GM12878 (cell line): ENCODE measurements at regions of chr3 and their contacts with region 1.

Region 1: DNA sequence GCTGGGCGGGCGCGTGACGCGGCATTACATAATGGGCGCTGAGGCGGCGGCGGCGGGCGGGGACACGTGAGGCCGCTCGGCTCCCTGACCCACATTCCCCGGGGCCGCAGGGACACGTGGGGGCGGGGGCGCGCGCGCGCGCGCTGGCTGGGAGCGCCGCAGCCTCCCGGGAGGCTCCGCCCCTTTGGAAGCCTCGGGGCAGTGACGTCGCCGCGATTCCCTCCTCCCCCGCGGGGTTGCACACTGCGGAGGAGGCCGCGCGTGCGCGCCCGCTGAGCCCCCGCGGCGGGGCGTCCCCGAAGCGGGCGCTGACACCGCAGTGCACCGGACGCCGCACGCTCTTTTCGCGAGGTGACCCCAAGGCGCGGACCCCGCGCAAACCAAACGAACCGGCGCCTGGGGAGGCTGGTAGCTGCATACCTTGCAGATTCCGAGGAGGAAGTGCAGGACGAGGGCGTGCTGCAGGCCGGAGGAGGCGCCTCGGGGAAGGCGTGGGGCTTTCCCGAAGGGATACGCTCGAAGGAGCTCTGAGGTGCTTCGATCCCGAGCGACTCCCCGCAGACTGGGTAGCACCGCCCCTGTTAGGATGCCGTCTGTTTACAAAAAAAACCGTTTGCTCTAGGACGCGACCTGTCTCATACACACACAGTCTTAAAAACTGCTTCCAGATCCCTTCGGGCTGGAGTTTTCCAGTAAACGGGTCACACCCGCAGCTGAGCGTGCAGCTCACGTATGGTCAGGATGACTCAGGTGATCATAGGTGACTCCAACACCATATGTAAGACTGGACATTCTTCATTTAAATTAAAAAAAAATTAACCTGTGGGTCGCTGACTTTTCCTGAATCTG is 1.0 kb downstream of the NR1D2 start:
- DNase-seq: peak; percentile 66
- ATAC-seq: peak; percentile 81
- H3K4me3 ChIP-seq: peak overlapping the region; percentile 98
- H3K27ac ChIP-seq: peak overlapping the region; percentile 82
- H3K4me1 ChIP-seq: peaks cover 12% of the 10 kb centered on the region
- H3K27me3 ChIP-seq: peaks cover 0 to 3% of the 10 kb centered on the region in 2 experiments; a peak in 1 of 4 replicates
- CTCF ChIP-seq: no peak
- EP300 ChIP-seq: peak in 1 of 2 experiments; percentile 39; a peak in 1 of 4 replicates
- POLR2A ChIP-seq: peak; percentile 78
- RAD21 ChIP-seq: no peak

Region 2: GRCh38 chr3:23659274-23659673 is 286.9 kb before region 1 on chr3:
- CTCF ChIA-PET with region 1: no interaction called
- POLR2A ChIA-PET with region 1: no interaction called
- RAD21 ChIA-PET with region 1: no interaction called
- SMC1A ChIA-PET with region 1: interaction called, 3 read pairs
- in situ Hi-C with region 1: no loop called
- intact Hi-C with region 1: loop called (anchors 10 kb)
- DNase-seq: peak; percentile 60
- ATAC-seq: peak; percentile 88
- H3K4me3 ChIP-seq: no peak overlapping the region
- H3K27ac ChIP-seq: peak overlapping the region; percentile 81
- H3K4me1 ChIP-seq: peaks cover 36% of the 10 kb centered on the region
- H3K27me3 ChIP-seq: no peaks in the 10 kb centered on the region
- CTCF ChIP-seq: no peak
- EP300 ChIP-seq: peak; percentile 36 to 56; a peak in 1 of 4 replicates
- POLR2A ChIP-seq: no peak
- RAD21 ChIP-seq: no peak

Region 3: DNA sequence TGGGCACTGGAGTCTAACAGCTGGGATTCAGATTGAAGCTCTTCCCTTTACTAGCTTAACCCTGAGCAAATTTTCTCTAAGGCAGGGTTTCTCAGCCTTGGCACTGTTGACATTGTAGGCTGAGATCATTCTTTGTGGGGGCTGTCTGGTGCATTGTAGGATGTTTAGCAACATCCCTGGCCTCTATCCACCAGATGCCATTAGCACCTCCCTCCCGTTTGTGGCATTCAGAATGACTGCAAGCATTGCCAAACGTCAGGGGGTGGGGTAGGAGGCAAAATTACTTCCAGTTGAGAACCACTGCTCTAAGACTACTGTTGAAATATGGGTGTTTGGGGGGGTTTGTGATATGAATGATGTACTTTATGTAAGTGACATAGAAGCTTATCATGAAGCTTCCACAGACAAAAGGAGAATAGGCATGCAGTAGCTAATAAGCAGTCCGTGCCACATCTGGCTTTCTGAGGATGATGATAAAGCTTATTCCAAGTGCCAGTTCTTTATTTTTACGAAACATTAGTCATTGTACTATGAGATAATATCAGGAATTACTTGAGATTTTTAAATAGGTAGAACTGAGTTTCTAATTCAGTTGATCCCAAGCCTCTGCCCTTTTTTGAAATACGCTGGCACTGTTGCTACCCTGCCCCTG is 68.7 kb before region 1 on chr3:
- CTCF ChIA-PET with region 1: no interaction called
- POLR2A ChIA-PET with region 1: no interaction called
- RAD21 ChIA-PET with region 1: no interaction called
- SMC1A ChIA-PET with region 1: no interaction called
- in situ Hi-C with region 1: no loop called
- intact Hi-C with region 1: no loop called
- DNase-seq: no peak
- ATAC-seq: no peak
- H3K4me3 ChIP-seq: no peak overlapping the region
- H3K27ac ChIP-seq: no peak overlapping the region
- H3K4me1 ChIP-seq: no peaks in the 10 kb centered on the region
- H3K27me3 ChIP-seq: no peaks in the 10 kb centered on the region
- CTCF ChIP-seq: no peak
- EP300 ChIP-seq: no peak
- POLR2A ChIP-seq: no peak
- RAD21 ChIP-seq: no peak

Region 4: GRCh38 chr3:23916886-23917678 is 29.0 kb before region 1 on chr3 and contains the starts of genes NKIRAS1 and RPL15:
- CTCF ChIA-PET with region 1: interaction called, 6 read pairs
- POLR2A ChIA-PET with region 1: interaction called, 11 read pairs
- RAD21 ChIA-PET with region 1: interaction called, 18 read pairs
- SMC1A ChIA-PET with region 1: interaction called, 18 read pairs
- in situ Hi-C with region 1: no loop called
- intact Hi-C with region 1: loop called (anchors 1 kb)
- DNase-seq: peak; percentile 89
- ATAC-seq: peak; percentile 90
- H3K4me3 ChIP-seq: peak within 1 kb of the TSS; percentile 100
- H3K27ac ChIP-seq: peak within 1 kb of the TSS; percentile 95
- H3K4me1 ChIP-seq: peaks cover 3% of the 10 kb centered on the region
- H3K27me3 ChIP-seq: no peaks in the 10 kb centered on the region
- CTCF ChIP-seq: peak in 2 of 3 experiments; percentile 15 to 38; a peak in 2 of 6 replicates
- EP300 ChIP-seq: peak; percentile 42 to 71; a peak in 2 of 4 replicates
- POLR2A ChIP-seq: peak; percentile 100
- RAD21 ChIP-seq: no peak
- polyA plus RNA-seq, gene NKIRAS1: 8.9 to 10.2 TPM
- polyA plus RNA-seq, gene RPL15: 6,967 to 10,761 TPM

Region 5: GRCh38 chr3:23959135-23959900 is 13.2 kb after region 1 on chr3:
- CTCF ChIA-PET with region 1: interaction called, 4 read pairs
- POLR2A ChIA-PET with region 1: interaction called, 9 read pairs
- RAD21 ChIA-PET with region 1: interaction called, 3 read pairs
- SMC1A ChIA-PET with region 1: interaction called, 14 read pairs
- in situ Hi-C with region 1: no loop called
- intact Hi-C with region 1: no loop called
- DNase-seq: no peak
- ATAC-seq: peak; percentile 66
- H3K4me3 ChIP-seq: no peak overlapping the region
- H3K27ac ChIP-seq: no peak overlapping the region
- H3K4me1 ChIP-seq: no peaks in the 10 kb centered on the region
- H3K27me3 ChIP-seq: no peaks in the 10 kb centered on the region
- CTCF ChIP-seq: no peak
- EP300 ChIP-seq: no peak
- POLR2A ChIP-seq: no peak
- RAD21 ChIP-seq: no peak

Region 6: GRCh38 chr3:24351779-24352469 is 405.8 kb after region 1 on chr3:
- CTCF ChIA-PET with region 1: no interaction called
- POLR2A ChIA-PET with region 1: no interaction called
- RAD21 ChIA-PET with region 1: no interaction called
- SMC1A ChIA-PET with region 1: no interaction called
- in situ Hi-C with region 1: no loop called
- intact Hi-C with region 1: no loop called
- DNase-seq: no peak
- ATAC-seq: no peak
- H3K4me3 ChIP-seq: no peak overlapping the region
- H3K27ac ChIP-seq: no peak overlapping the region
- H3K4me1 ChIP-seq: no peaks in the 10 kb centered on the region
- H3K27me3 ChIP-seq: no peaks in the 10 kb centered on the region
- CTCF ChIP-seq: no peak
- EP300 ChIP-seq: no peak
- POLR2A ChIP-seq: no peak
- RAD21 ChIP-seq: no peak

Region 7: DNA sequence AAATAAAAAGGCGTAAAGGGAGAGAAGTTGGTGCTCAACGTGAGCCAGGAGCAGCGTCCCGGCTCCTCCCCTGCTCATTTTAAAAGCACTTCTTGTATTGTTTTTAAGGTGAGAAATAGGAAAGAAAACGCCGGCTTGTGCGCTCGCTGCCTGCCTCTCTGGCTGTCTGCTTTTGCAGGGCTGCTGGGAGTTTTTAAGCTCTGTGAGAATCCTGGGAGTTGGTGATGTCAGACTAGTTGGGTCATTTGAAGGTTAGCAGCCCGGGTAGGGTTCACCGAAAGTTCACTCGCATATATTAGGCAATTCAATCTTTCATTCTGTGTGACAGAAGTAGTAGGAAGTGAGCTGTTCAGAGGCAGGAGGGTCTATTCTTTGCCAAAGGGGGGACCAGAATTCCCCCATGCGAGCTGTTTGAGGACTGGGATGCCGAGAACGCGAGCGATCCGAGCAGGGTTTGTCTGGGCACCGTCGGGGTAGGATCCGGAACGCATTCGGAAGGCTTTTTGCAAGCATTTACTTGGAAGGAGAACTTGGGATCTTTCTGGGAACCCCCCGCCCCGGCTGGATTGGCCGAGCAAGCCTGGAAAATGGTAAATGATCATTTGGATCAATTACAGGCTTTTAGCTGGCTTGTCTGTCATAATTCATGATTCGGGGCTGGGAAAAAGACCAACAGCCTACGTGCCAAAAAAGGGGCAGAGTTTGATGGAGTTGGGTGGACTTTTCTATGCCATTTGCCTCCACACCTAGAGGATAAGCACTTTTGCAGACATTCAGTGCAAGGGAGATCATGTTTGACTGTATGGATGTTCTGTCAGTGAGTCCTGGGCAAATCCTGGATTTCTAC is 1482.0 kb after region 1 on chr3 and contains the start of gene RARB:
- CTCF ChIA-PET with region 1: no interaction called
- POLR2A ChIA-PET with region 1: no interaction called
- RAD21 ChIA-PET with region 1: no interaction called
- SMC1A ChIA-PET with region 1: no interaction called
- in situ Hi-C with region 1: no loop called
- intact Hi-C with region 1: no loop called
- DNase-seq: no peak
- ATAC-seq: no peak
- H3K4me3 ChIP-seq: no peak within 1 kb of the TSS
- H3K27ac ChIP-seq: no peak within 1 kb of the TSS
- H3K4me1 ChIP-seq: no peaks in the 10 kb centered on the region
- H3K27me3 ChIP-seq: peaks cover 2 to 16% of the 10 kb centered on the region in 2 experiments
- CTCF ChIP-seq: no peak
- EP300 ChIP-seq: no peak
- POLR2A ChIP-seq: no peak
- RAD21 ChIP-seq: no peak
- polyA plus RNA-seq, gene RARB: 0.05 to 0.06 TPM

Region 8: GRCh38 chr3:25789596-25790556 is 1843.7 kb after region 1 on chr3 and contains the start of gene OXSM:
- CTCF ChIA-PET with region 1: no interaction called
- POLR2A ChIA-PET with region 1: no interaction called
- RAD21 ChIA-PET with region 1: no interaction called
- SMC1A ChIA-PET with region 1: no interaction called
- in situ Hi-C with region 1: loop called (anchors 25 kb)
- intact Hi-C with region 1: no loop called
- DNase-seq: peak; percentile 93
- ATAC-seq: peak; percentile 94
- H3K4me3 ChIP-seq: peak within 1 kb of the TSS; percentile 78
- H3K27ac ChIP-seq: peak within 1 kb of the TSS; percentile 84
- H3K4me1 ChIP-seq: peaks cover 4% of the 10 kb centered on the region; the same call in 1 of the 2 replicates
- H3K27me3 ChIP-seq: no peaks in the 10 kb centered on the region
- CTCF ChIP-seq: no peak
- EP300 ChIP-seq: peak; percentile 43 to 61; a peak in 3 of 4 replicates
- POLR2A ChIP-seq: peak; percentile 91
- RAD21 ChIP-seq: 0 out of 2 replicates have a peak, but pooled peaks have one; percentile 6
- polyA plus RNA-seq, gene OXSM: 28.6 to 32.5 TPM